ENCODE measurements at regions of chr2 and their contacts with region 1.

Region 1: DNA sequence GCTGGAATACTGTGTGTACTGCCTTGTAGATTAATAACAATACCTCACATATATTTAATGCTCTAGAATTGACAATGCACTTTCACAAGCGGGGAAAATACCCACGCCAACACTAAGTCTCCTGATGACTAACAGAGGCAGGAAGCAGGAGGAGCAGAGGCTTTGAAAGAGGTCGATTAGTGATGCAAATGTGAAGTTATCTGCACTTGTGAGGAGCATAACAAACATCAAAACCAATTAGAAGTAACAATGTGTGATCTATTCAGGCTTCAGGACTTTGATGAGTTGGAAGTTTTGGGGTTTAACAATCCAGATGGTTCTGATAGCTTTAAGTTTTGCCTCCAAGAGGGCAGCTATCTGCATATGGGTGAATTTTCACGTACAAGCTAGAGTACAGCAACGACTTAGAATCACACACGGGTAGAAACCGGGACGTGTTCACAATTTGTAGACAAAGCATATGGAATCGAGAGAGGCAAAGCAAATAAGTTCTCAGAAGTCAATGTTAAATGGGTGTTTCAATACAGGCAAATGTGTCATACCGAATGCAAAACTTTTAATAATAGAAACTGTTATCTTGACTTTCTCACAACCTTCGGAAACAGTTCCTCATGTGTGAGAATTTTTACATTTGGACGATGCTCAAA is 114.5 kb downstream of the METTL8 start:
- DNase-seq: peak; percentile 85
- H3K4me3 Mint-ChIP-seq: peak overlapping the region; percentile 55
- H3K27ac Mint-ChIP-seq: peak overlapping the region; percentile 99
- H3K4me1 Mint-ChIP-seq: peaks cover 54% of the 10 kb centered on the region
- H3K27me3 Mint-ChIP-seq: no peaks in the 10 kb centered on the region

Region 2: DNA sequence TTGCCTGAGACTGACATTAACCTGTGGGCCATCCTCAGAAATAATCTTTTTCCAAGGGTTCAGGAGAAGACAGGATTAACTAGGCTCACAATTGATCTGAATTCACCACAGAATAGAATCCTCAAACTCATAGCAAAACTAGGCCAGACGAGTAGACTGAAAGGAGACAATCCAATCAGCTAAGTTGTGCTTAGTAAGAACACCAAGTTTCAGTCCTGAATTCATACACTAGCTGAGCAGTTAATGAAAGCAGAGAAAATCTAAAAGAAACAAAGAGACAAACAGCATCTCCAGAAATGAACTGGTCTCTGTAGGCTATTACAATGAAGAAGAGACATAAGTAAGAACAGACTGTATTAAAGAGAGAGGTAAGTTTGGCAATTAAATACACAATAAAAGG is 300.8 kb before region 1 on chr2:
- CTCF ChIA-PET with region 1: no interaction called
- intact Hi-C with region 1: loop called (anchors 1 kb)
- DNase-seq: no peak
- H3K4me3 Mint-ChIP-seq: no peak overlapping the region
- H3K27ac Mint-ChIP-seq: peak overlapping the region; percentile 53
- H3K4me1 Mint-ChIP-seq: peaks cover 36% of the 10 kb centered on the region
- H3K27me3 Mint-ChIP-seq: no peaks in the 10 kb centered on the region

Region 3: GRCh38 chr2:171160119-171160955 is 158.9 kb before region 1 on chr2 and contains the start of gene TLK1:
- CTCF ChIA-PET with region 1: no interaction called
- intact Hi-C with region 1: loop called (anchors 1 kb)
- DNase-seq: peak; percentile 75
- H3K4me3 Mint-ChIP-seq: peak within 1 kb of the TSS; percentile 90
- H3K27ac Mint-ChIP-seq: peak within 1 kb of the TSS; percentile 93
- H3K4me1 Mint-ChIP-seq: peaks cover 57% of the 10 kb centered on the region
- H3K27me3 Mint-ChIP-seq: no peaks in the 10 kb centered on the region
- total RNA-seq, gene TLK1: 54.5 to 55.9 TPM

Region 4: GRCh38 chr2:171347591-171348032 is 28.3 kb after region 1 on chr2:
- CTCF ChIA-PET with region 1: interaction called, 3 read pairs
- intact Hi-C with region 1: loop called (anchors 1 kb)
- DNase-seq: peak; percentile 28
- H3K4me3 Mint-ChIP-seq: no peak overlapping the region
- H3K27ac Mint-ChIP-seq: no peak overlapping the region
- H3K4me1 Mint-ChIP-seq: peaks cover 36% of the 10 kb centered on the region
- H3K27me3 Mint-ChIP-seq: no peaks in the 10 kb centered on the region

Region 5: DNA sequence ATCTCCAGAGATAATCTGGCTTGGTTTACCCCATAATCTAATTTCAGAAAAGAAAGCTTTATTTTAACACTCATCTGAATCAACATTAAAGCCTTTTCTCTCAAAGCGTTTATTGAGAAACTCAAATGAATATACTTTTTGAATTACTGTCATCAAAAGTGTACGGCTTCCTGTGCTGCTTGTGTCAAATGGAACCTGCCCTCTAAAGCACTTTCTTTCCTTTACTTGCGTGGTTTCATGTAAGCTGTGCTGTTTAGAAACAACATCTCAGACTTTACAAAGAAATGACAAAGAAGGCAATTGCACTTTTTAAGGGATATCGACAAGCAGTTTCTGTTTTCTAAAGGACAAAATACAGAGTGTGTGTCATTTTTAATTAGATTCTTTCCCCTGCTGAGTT is 238.1 kb after region 1 on chr2:
- CTCF ChIA-PET with region 1: no interaction called
- intact Hi-C with region 1: loop called (anchors 1 kb)
- DNase-seq: peak; percentile 32
- H3K4me3 Mint-ChIP-seq: peak overlapping the region; percentile 3
- H3K27ac Mint-ChIP-seq: peak overlapping the region; percentile 50
- H3K4me1 Mint-ChIP-seq: no peaks in the 10 kb centered on the region
- H3K27me3 Mint-ChIP-seq: peaks cover 1% of the 10 kb centered on the region

Measured in activated naive CD4-positive, alpha-beta T cell treated with anti-CD3 and anti-CD28 coated beads for 36 hours (primary cell).